H1 (cell line): ENCODE measurements at regions of chr6 and their contacts with region 1.

Region 1: GRCh38 chr6:93829009-93829408 is 409.6 kb upstream of the EPHA7 start:
- DNase-seq: no peak
- H3K4me3 ChIP-seq: peak overlapping the region in 1 of 4 experiments; percentile 30; a peak in 1 of 8 replicates
- H3K27ac ChIP-seq: no peak overlapping the region
- H3K4me1 ChIP-seq: no peaks in the 10 kb centered on the region
- H3K27me3 ChIP-seq: no peaks in the 10 kb centered on the region
- CTCF ChIP-seq: no peak
- EP300 ChIP-seq: no peak
- POLR2A ChIP-seq: no peak; a peak in 1 of 3 replicates
- RAD21 ChIP-seq: no peak

Region 2: GRCh38 chr6:93786474-93787330 is 42.3 kb before region 1 on chr6:
- CTCF ChIA-PET with region 1: no interaction called
- POLR2A ChIA-PET with region 1: interaction called, 12 read pairs
- DNase-seq: peak in 1 of 2 experiments; percentile 76
- H3K4me3 ChIP-seq: peak overlapping the region in 1 of 4 experiments; percentile 35; a peak in 2 of 8 replicates
- H3K27ac ChIP-seq: peak overlapping the region; percentile 49; the same call in 1 of the 2 replicates
- H3K4me1 ChIP-seq: peaks cover 0 to 20% (median 13%) of the 10 kb centered on the region in 4 experiments; a peak in 5 of 7 replicates
- H3K27me3 ChIP-seq: no peaks in the 10 kb centered on the region
- CTCF ChIP-seq: no peak
- EP300 ChIP-seq: peak in 1 of 2 experiments; percentile 94; a peak in 2 of 3 replicates
- POLR2A ChIP-seq: no peak
- RAD21 ChIP-seq: 0 out of 4 replicates have a peak, but pooled peaks of 1 of the 2 experiments have one; percentile 5

Region 3: DNA sequence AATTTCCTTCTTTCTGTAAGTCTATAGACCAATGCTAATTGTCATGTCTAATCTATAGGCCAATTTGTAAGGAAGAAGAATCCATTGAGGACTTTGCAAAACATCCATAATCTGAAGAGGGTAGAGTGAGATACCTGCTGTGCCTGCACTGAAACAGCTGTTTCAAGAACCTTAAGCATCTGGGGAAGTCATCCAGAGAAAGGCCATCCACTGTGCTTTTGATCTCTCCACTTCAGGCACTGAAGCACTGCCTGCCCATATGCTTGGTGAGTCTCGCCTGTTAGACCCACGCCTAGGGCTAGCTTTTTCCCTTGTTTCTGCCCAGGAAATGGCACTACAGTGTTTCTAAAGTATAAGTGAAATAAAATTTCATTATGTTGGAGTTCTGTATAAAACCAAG is 512.2 kb after region 1 on chr6:
- CTCF ChIA-PET with region 1: no interaction called
- POLR2A ChIA-PET with region 1: no interaction called
- DNase-seq: no peak
- H3K4me3 ChIP-seq: no peak overlapping the region
- H3K27ac ChIP-seq: no peak overlapping the region
- H3K4me1 ChIP-seq: no peaks in the 10 kb centered on the region
- H3K27me3 ChIP-seq: no peaks in the 10 kb centered on the region
- CTCF ChIP-seq: no peak
- EP300 ChIP-seq: no peak
- POLR2A ChIP-seq: no peak
- RAD21 ChIP-seq: no peak; a peak in 1 of 4 replicates